ENCODE measurements at regions of chr9 and their contacts with region 1.

Region 1: DNA sequence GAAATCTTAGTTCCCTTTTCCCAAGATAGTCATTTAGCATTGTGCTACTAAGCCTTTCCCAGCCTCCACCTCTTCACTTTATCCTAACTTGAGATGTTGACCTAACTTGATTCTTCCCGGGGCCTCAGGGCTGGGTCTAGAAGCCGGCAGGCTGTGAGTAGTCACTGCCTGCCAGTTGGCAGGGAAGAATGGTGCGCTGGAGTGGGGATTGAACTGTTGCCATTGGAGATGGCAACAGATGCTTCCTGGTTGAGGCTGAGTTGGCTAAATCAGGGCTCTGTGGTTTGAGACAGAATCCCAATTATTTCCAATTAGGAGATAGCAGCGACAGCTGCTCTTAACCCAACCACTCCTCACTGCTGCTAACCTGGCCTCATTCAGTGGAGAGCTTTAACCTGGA is 343.1 kb downstream of the BRINP1 start:
- DNase-seq: peak; percentile 50
- ATAC-seq: peak; percentile 78 to 89

Region 2: GRCh38 chr9:118961857-118962256 is 64.3 kb before region 1 on chr9:
- intact Hi-C with region 1: no loop called
- DNase-seq: no peak
- ATAC-seq: peak; percentile 82 to 96

Region 3: GRCh38 chr9:119004620-119004994 is 21.5 kb before region 1 on chr9:
- intact Hi-C with region 1: loop called in 1 of 2 experiments (anchors 2 kb)
- DNase-seq: peak; percentile 75
- ATAC-seq: peak; percentile 90 to 92

Measured in left cardiac atrium (tissue), 4 donors.